HCT116 (cell line): ENCODE measurements at regions of chr12 and their contacts with region 1.

Region 1: DNA sequence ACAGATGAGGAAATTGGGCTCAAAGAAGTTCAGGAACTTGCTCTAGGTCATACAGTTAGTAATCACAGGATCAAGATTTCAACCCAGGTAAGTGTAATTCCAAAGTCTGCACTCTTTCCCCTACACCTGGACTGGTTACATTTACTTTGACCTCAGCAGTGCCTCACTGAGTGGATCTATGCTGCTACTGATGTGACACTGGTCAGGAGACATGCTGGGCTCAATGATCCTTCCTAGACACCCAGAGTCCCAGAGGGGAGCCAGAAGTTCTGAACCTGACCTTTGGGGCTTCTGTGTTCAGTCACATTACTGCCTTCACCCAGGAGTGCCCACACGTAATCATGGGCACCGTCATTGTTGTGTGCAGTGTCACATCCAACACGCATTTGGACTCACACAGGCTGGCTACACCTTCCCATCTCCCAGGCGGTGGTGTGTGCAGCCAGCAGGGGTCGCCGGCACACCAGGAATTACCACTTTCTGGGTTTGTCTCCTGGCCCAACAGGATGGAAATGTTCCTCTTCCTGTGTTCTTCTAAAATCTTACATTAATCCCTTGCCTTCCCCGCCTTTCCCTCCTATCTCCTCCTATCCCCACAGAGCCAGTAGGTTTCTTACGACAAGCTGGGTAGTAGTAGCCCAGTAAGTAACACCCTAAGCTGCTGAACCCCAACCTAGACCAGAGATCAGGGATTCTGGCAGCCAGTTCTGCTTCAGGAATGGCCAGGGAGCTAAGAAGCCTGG is 25.6 kb downstream of the CALCOCO1 start:
- DNase-seq: peak; percentile 60
- ATAC-seq: peak; percentile 99
- H3K4me3 ChIP-seq: no peak overlapping the region
- H3K27ac ChIP-seq: no peak overlapping the region
- H3K4me1 ChIP-seq: peaks cover under 1 to 8% of the 10 kb centered on the region in 2 experiments; a peak in 2 of 4 replicates
- H3K27me3 ChIP-seq: peaks cover 8% of the 10 kb centered on the region
- CTCF ChIP-seq: peak; percentile 89 to 98 (median 90)
- POLR2A ChIP-seq: no peak
- RAD21 ChIP-seq: peak; percentile 98

Region 2: GRCh38 chr12:53190108-53190729 is 511.5 kb before region 1 on chr12:
- CTCF ChIA-PET with region 1: no interaction called
- POLR2A ChIA-PET with region 1: no interaction called
- RAD21 ChIA-PET with region 1: no interaction called
- intact Hi-C with region 1: no loop called
- DNase-seq: peak; percentile 23
- ATAC-seq: peak; percentile 97
- H3K4me3 ChIP-seq: no peak overlapping the region
- H3K27ac ChIP-seq: no peak overlapping the region
- H3K4me1 ChIP-seq: peaks cover 4 to 6% of the 10 kb centered on the region in 2 experiments; a peak in 2 of 4 replicates
- H3K27me3 ChIP-seq: no peaks in the 10 kb centered on the region
- CTCF ChIP-seq: peak; percentile 63 to 96 (median 88)
- POLR2A ChIP-seq: no peak
- RAD21 ChIP-seq: peak; percentile 54

Region 3: DNA sequence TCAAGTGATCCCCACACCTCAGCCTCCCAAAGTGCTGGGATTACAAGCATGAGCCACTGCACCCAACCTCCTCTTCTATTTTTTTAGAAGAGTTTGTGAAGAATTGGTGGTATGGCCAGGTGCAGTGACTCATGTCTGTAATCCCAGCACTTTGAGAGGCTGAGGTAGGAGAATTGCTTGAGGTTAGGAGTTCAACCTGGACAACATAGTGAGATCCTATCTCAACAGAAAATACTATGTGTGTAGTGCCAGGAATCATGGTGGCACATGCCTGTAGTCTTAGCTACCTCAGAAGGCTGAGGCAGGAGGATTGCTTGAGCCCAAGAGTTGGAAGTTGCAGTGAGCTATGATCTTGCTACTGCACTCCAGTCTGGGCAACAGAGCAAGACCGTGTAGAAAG is 70.0 kb before region 1 on chr12:
- CTCF ChIA-PET with region 1: no interaction called
- POLR2A ChIA-PET with region 1: no interaction called
- RAD21 ChIA-PET with region 1: no interaction called
- intact Hi-C with region 1: no loop called
- DNase-seq: no peak
- ATAC-seq: no peak
- H3K4me3 ChIP-seq: no peak overlapping the region
- H3K27ac ChIP-seq: no peak overlapping the region
- H3K4me1 ChIP-seq: peaks cover 0 to 6% of the 10 kb centered on the region in 2 experiments; a peak in 3 of 4 replicates
- H3K27me3 ChIP-seq: no peaks in the 10 kb centered on the region
- CTCF ChIP-seq: no peak
- POLR2A ChIP-seq: no peak
- RAD21 ChIP-seq: no peak

Region 4: DNA sequence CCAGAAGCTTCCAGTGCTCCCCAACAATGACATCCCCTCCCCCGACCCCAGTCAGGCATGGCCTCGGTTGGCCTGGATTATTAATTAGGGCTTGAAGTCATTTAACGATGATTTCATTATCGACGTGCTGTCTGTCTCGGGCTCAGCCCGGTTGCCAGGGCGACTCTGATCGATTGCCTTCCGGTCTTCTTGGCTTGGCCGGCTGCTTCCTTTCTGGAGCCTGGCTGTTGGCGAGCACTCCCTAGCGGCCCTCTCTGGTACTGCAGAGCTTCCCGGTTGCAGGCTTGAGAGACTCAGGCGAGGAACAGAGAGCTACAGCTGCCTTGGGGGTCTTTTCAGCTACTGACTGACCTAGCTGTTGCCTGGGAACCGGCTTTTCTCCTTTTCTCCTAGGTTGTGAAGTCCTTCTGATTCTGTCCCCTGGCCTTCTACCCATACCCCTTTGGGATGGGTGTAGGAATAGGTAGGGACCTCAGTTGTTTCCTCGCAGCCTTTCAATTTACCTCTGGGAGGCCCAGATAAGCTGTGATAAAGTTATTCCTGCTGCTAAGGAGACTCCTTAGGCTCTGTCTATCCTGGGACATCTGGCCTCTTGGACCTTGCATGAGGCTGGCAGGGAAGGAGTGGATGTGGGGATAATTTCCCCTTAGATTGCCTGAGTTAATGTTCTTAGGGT is 55.5 kb after region 1 on chr12:
- CTCF ChIA-PET with region 1: interaction called, 13 read pairs
- POLR2A ChIA-PET with region 1: no interaction called
- RAD21 ChIA-PET with region 1: interaction called in 1 of 2 experiments, 4 read pairs
- intact Hi-C with region 1: no loop called
- DNase-seq: peak; percentile 58
- ATAC-seq: peak; percentile 92
- H3K4me3 ChIP-seq: peak overlapping the region in 1 of 2 experiments; percentile 37; a peak in 1 of 4 replicates
- H3K27ac ChIP-seq: no peak overlapping the region
- H3K4me1 ChIP-seq: peaks cover 3 to 13% of the 10 kb centered on the region in 2 experiments; a peak in 3 of 4 replicates
- H3K27me3 ChIP-seq: peaks cover 6% of the 10 kb centered on the region; the same call in 1 of the 2 replicates
- CTCF ChIP-seq: peak; percentile 62 to 98 (median 95); a peak in 5 of 6 replicates
- POLR2A ChIP-seq: no peak
- RAD21 ChIP-seq: peak; percentile 64

Region 5: GRCh38 chr12:54214553-54215406 is 513.1 kb after region 1 on chr12:
- CTCF ChIA-PET with region 1: interaction called, 3 read pairs
- POLR2A ChIA-PET with region 1: no interaction called
- RAD21 ChIA-PET with region 1: no interaction called
- intact Hi-C with region 1: loop called (anchors 5 kb)
- DNase-seq: peak; percentile 85
- ATAC-seq: peak; percentile 93
- H3K4me3 ChIP-seq: peak overlapping the region; percentile 15 to 30; a peak in 3 of 4 replicates
- H3K27ac ChIP-seq: no peak overlapping the region
- H3K4me1 ChIP-seq: peaks cover 3 to 26% of the 10 kb centered on the region in 2 experiments
- H3K27me3 ChIP-seq: no peaks in the 10 kb centered on the region
- CTCF ChIP-seq: peak; percentile 98 to 100 (median 99)
- POLR2A ChIP-seq: no peak
- RAD21 ChIP-seq: peak; percentile 70